ENCODE measurements at regions of chr6 and their contacts with region 1.

Region 1: DNA sequence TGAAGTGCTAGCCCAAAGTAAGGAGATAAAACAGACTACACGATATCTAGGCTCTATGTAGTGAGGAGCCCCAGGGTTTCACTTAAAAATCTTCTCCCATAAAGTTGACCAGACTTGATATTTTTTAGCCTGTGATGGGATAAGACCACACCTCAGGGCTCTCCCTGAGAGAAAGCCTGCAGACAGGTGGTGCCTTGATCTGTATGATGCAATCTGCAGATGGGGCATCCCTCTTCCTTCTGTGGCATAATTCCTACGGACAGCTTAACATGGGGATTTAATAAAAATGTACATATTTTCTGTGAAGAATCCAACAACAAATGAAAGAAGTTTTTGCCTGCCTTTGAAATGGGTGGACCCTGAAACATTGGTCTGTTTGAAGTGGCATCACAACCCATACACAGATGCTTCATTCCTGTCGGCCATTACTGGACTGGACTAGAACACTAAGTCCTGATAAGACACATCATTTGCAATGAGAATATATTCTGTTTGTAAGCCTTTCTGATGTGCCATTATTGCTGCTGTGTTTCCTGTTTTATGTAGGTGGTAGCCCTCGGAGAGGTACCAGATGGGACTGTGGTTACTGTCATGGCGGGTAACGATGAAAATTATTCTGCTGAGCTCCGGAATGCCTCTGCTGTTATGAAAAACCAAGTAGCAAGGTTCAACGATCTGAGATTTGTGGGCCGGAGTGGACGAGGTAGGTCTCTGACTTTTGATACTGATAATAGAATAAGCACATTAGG is 53.8 kb upstream of the SUPT3H start:
- DNase-seq: peak in 1 of 3 donors; percentile 38
- H3K4me3 ChIP-seq: peak overlapping the region in 3 of 7 experiments; percentile 6 to 51 (median 26)
- H3K27ac ChIP-seq: no peak overlapping the region
- H3K4me1 ChIP-seq: peaks cover 52 to 93% (median 71%) of the 10 kb centered on the region in 4 experiments
- H3K27me3 ChIP-seq: no peaks in the 10 kb centered on the region

Region 2: DNA sequence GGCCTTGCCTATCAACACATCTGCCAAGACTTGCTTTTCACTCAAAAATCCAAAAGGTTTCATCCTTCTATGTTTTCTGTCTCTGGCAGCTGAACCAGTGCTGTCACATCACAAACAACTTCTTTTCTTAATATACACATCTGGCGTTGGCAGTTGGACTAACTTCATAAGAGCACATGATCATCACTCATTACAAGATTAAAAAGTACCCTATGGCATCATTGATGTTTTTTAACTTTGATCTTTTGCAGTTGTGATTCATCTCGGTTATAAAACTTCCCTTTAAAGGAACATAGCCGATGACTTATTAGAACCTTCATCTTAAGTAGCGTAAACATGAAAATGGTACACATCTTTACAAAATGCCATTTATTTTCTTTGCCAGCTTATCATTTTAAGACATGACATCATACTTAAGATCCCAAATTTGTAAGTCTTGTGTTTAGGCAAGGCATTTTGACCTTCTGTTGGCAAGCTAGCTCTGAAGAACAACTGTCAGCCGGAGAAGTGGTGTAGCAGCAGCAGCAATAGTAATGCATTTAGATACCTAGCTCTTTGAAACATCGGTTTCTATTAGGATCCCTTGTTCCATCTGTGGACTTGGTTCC is 10.5 kb after region 1 on chr6:
- CTCF ChIA-PET with region 1: interaction called, 10 read pairs
- POLR2A ChIA-PET with region 1: interaction called, 3 read pairs
- DNase-seq: peak in 2 of 3 donors; percentile 39 to 52
- H3K4me3 ChIP-seq: no peak overlapping the region
- H3K27ac ChIP-seq: no peak overlapping the region
- H3K4me1 ChIP-seq: peaks cover 48 to 89% (median 69%) of the 10 kb centered on the region in 4 experiments
- H3K27me3 ChIP-seq: no peaks in the 10 kb centered on the region

Region 3: GRCh38 chr6:45566882-45567281 is 135.4 kb after region 1 on chr6:
- CTCF ChIA-PET with region 1: no interaction called
- POLR2A ChIA-PET with region 1: no interaction called
- DNase-seq: no peak
- H3K4me3 ChIP-seq: no peak overlapping the region
- H3K27ac ChIP-seq: no peak overlapping the region
- H3K4me1 ChIP-seq: no peaks in the 10 kb centered on the region
- H3K27me3 ChIP-seq: no peaks in the 10 kb centered on the region

Region 4: DNA sequence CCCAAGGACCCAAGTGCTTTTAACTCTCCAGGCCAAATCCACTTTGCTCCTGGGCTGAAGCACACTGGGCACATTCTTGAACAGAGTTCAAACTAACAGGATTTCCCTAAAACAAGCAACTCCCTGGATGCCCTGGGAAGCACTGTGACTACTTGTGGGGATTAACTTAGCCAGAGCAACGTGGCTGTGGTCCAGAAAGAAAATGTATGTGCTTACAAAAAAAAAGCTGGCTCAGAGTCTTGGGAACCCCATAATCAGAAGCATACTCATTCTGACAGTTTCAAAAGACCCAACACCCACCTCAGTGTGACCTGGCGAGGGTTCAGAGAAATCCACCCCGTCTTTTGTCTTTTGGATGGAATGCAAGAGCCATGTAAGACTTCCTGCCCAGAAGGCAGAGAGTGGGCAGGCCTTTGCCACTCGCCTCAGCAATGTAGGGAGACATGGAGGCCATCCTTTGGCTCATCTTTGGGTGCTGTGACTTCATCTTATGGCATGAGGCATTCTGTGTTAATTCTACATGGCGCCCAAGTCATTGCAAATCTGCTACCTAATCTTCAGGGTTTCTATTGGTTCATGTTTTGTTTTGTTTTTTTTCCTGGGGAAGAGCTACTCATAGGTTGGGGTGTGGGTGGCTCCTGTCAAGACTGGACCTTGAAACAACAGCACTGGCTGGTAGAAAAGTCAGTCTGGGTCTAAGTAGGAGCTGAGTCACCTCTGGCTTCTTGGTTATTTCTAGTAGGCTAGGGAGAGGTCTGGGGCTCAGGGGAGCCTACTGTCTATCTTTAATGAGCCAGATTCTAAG is 194.8 kb after region 1 on chr6:
- CTCF ChIA-PET with region 1: no interaction called
- POLR2A ChIA-PET with region 1: no interaction called
- DNase-seq: no peak
- H3K4me3 ChIP-seq: no peak overlapping the region
- H3K27ac ChIP-seq: no peak overlapping the region
- H3K4me1 ChIP-seq: no peaks in the 10 kb centered on the region
- H3K27me3 ChIP-seq: no peaks in the 10 kb centered on the region

Measured in common myeloid progenitor, CD34-positive (primary cell).